ENCODE measurements at regions of chr1 and their contacts with region 1.

Region 1: GRCh38 chr1:234545859-234546561 is 64.0 kb downstream of the IRF2BP2 start:
- DNase-seq: no peak
- ATAC-seq: no peak
- H3K4me3 ChIP-seq: no peak overlapping the region
- H3K4me3 Mint-ChIP-seq: no peak overlapping the region
- H3K27ac ChIP-seq: no peak overlapping the region
- H3K27ac Mint-ChIP-seq: no peak overlapping the region
- H3K4me1 ChIP-seq: peaks cover 14% of the 10 kb centered on the region
- H3K4me1 Mint-ChIP-seq: peaks cover 17% of the 10 kb centered on the region
- H3K27me3 ChIP-seq: no peaks in the 10 kb centered on the region
- H3K27me3 Mint-ChIP-seq: no peaks in the 10 kb centered on the region
- CTCF ChIP-seq: no peak

Region 2: GRCh38 chr1:234584926-234585325 is 38.9 kb after region 1 on chr1:
- CTCF ChIA-PET with region 1: no interaction called
- POLR2A ChIA-PET with region 1: no interaction called
- intact Hi-C with region 1: no loop called
- DNase-seq: no peak
- ATAC-seq: no peak
- H3K4me3 ChIP-seq: no peak overlapping the region
- H3K4me3 Mint-ChIP-seq: no peak overlapping the region
- H3K27ac ChIP-seq: no peak overlapping the region
- H3K27ac Mint-ChIP-seq: no peak overlapping the region
- H3K4me1 ChIP-seq: no peaks in the 10 kb centered on the region
- H3K4me1 Mint-ChIP-seq: no peaks in the 10 kb centered on the region
- H3K27me3 ChIP-seq: peaks cover 0 to 2% of the 10 kb centered on the region in 2 experiments
- H3K27me3 Mint-ChIP-seq: peaks cover 9% of the 10 kb centered on the region
- CTCF ChIP-seq: no peak

Region 3: DNA sequence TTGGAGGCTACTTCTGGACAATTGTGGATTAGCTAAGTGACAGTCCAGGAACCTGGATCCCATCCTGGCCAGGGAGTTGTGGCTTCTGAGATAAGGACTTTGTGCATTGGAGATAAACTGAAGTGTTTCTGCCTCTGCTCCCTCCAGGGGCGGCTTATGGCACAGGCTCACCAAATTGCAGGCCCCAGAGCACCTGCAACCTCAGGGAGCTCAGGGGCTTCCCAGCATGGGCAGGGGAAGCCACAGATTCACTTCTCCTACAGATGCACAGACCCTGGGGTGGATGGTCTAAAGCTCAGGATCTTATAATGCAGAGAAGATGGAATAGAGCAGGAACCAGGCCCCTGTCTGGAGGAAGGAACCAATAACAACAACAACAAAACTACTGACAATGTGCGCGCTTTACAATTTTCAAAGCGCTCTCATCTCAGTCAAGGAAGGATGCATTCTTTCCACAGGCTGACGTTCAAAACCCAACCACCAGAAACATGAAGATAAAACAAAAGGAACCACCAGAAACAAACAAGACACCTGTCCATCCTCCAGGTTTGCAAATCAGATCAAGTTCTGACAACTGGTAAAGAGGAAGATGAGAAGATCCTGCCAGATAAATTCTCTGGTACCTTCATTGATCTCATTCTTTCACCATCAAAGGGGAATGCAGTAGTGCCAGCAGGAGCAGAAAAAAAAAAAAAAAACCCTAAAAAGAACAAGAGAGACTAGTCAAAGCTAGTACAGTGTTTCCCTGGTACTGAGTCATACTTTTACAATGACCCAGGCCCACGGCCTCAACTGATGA is 185.0 kb after region 1 on chr1:
- CTCF ChIA-PET with region 1: no interaction called
- POLR2A ChIA-PET with region 1: no interaction called
- intact Hi-C with region 1: no loop called
- DNase-seq: peak in 7 of 9 experiments; percentile 4 to 81 (median 54)
- ATAC-seq: peak; percentile 77
- H3K4me3 ChIP-seq: no peak overlapping the region
- H3K4me3 Mint-ChIP-seq: peak overlapping the region; percentile 8
- H3K27ac ChIP-seq: peak overlapping the region in 1 of 2 experiments; percentile 43
- H3K27ac Mint-ChIP-seq: peak overlapping the region; percentile 72
- H3K4me1 ChIP-seq: peaks cover 37% of the 10 kb centered on the region
- H3K4me1 Mint-ChIP-seq: peaks cover 45% of the 10 kb centered on the region
- H3K27me3 ChIP-seq: no peaks in the 10 kb centered on the region
- H3K27me3 Mint-ChIP-seq: no peaks in the 10 kb centered on the region
- CTCF ChIP-seq: no peak

Region 4: DNA sequence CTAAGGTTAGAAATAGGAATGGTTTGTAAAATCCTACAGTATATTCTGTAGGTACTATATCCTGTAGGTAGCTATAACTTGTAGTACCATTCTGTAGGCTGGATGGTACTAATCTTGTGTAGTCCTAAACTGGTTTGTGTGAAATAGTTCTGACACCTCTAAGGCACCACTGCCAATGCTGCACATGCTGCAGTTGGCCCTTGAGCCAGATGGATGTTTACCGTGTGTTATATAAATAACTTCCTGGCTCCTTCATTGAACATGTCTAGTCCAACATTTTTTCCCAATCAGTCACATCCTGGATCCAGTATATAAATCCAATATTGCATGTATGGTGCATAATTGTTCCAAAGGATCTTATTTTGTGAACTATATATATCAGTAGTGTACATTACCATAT is 1193.1 kb after region 1 on chr1:
- CTCF ChIA-PET with region 1: no interaction called
- POLR2A ChIA-PET with region 1: no interaction called
- intact Hi-C with region 1: loop called in 1 of 2 experiments (anchors 5 kb)
- DNase-seq: no peak
- ATAC-seq: no peak
- H3K4me3 ChIP-seq: no peak overlapping the region
- H3K4me3 Mint-ChIP-seq: no peak overlapping the region
- H3K27ac ChIP-seq: no peak overlapping the region
- H3K27ac Mint-ChIP-seq: no peak overlapping the region
- H3K4me1 ChIP-seq: no peaks in the 10 kb centered on the region
- H3K4me1 Mint-ChIP-seq: peaks cover 2% of the 10 kb centered on the region
- H3K27me3 ChIP-seq: no peaks in the 10 kb centered on the region
- H3K27me3 Mint-ChIP-seq: no peaks in the 10 kb centered on the region
- CTCF ChIP-seq: no peak